Breast epithelium (tissue), 4 donors: ENCODE measurements at regions of chr1 and their contacts with region 1.

Region 1: DNA sequence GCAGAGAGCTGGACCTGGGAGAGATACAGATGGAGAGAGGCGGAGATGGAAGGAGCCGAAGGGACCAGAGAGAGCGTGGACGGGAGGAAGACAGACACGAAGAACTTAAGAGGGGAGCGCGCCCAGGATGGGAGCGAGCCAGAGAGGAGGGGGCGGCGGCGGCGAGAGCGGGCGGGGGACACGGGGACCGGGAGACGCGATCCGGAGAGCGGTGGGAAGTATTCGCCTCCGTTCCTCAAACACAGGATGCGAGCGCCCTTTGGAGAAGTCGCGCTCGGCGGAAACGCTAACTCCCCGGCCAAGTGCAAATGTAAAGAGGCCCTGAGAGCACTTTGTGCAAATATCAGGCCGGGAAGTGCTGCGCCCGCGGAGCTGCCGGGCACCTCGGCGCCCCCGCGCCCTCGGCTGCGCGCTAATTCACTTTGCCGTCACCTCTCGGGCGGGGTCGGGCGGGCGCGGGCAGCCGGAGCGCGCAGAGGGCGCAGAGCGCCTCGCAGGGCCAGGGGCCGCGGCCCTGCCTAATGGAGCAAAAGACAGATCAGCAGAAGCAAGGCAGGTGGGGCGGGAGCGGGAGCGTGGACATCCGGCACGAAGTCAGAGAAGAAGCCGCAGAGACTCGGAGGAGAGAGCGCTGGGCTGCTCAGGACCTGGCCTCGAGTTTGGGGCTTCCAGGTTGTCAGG is 281.2 kb downstream of the RRAGC start:
- DNase-seq: no peak
- H3K4me3 ChIP-seq: peak overlapping the region in 2 of 3 donors; percentile 27 to 59
- H3K27ac ChIP-seq: no peak overlapping the region
- H3K4me1 ChIP-seq: peaks cover 0 to 5% of the 10 kb centered on the region in 2 donors
- H3K27me3 ChIP-seq: peaks cover 3 to 32% of the 10 kb centered on the region in 2 donors
- CTCF ChIP-seq: no peak
- POLR2A ChIP-seq: no peak

Region 2: DNA sequence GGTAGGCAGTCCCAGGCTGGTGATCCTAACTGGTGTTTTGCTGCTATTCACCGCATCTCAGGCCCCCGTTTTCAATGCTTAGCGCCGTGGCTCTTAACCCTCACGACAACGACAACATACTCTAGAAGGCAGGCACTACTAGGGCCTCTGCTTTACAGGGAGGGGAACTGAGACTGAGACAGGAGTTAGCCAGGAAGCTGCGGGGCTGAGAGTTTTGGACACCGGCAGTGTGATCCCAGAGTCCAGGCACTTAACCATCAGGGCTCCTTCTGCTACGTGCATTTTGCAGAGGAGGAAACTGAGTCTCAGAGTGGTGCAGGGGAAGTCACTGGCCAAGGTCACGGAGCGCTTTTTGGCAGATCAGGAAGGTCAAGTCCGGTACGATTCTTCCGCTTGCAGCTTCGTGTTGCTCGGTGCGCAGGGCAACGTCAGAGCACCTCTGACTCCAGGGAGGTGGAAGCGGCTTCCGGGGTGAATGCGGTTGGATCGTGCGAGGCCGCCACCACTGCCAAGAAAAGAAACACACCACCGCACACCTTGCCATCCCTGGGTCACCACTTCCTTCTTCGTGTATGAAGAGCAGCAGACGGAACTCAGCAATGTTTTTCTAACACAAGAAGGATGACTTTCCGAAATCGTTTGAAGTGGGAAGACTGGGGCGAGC is 19.1 kb before region 1 on chr1:
- intact Hi-C with region 1: loop called (anchors 1 kb)
- DNase-seq: peak in 1 of 2 donors; percentile 45
- H3K4me3 ChIP-seq: peak overlapping the region; percentile 9 to 34 (median 29)
- H3K27ac ChIP-seq: no peak overlapping the region
- H3K4me1 ChIP-seq: peaks cover 4 to 9% of the 10 kb centered on the region in 2 donors
- H3K27me3 ChIP-seq: peaks cover 0 to 14% of the 10 kb centered on the region in 2 donors
- CTCF ChIP-seq: no peak
- POLR2A ChIP-seq: no peak